ENCODE measurements at regions of chr1 and their contacts with region 1.

Region 1: GRCh38 chr1:183318433-183318832 is 99.7 kb downstream of the NMNAT2 start:
- DNase-seq: peak; percentile 55 to 92
- H3K4me3 ChIP-seq: no peak overlapping the region
- H3K27ac ChIP-seq: peak overlapping the region; percentile 69 to 82
- H3K4me1 ChIP-seq: peaks cover 0 to 19% of the 10 kb centered on the region in 2 donors
- H3K27me3 ChIP-seq: no peaks in the 10 kb centered on the region
- CTCF ChIP-seq: peak; percentile 75 to 78 (median 77)

Region 2: DNA sequence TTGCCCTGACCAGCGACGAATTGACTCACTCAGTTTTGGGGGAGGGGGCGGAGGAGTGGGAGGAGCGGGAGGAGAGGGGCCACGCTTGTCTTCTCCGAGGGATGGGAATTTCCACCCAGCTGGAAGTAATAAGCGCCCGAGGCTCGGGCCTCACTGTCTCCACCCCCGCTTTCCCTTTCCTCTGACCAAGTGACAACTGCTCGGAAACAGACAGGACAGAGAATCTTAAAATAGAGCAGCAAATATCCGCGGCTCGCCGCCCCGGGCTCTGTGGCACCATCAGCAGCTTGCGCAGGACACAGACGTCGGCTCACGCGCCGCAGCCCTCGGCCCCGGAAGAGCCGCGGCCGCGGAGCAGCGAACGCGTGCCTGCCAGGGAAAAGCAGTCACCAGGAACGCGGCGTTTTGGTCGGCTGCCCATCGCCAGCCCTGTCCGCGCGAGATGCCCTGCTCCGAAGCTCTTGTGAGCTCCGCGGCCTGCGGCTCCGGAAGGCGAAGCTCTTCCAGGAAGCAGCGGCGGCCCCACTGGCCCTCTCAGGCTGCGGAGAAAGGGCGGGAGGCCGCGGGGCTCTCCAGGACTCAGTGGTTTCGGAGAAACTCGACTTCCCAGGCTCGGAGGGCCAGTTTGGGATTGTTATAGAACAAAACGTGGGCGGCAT is 703.5 kb before region 1 on chr1:
- intact Hi-C with region 1: loop called (anchors 10 kb)
- DNase-seq: peak; percentile 73 to 93
- H3K4me3 ChIP-seq: peak overlapping the region; percentile 55 to 61
- H3K27ac ChIP-seq: peak overlapping the region; percentile 93 to 96
- H3K4me1 ChIP-seq: peaks cover 23 to 36% of the 10 kb centered on the region in 2 donors
- H3K27me3 ChIP-seq: no peaks in the 10 kb centered on the region
- CTCF ChIP-seq: no peak

Region 3: DNA sequence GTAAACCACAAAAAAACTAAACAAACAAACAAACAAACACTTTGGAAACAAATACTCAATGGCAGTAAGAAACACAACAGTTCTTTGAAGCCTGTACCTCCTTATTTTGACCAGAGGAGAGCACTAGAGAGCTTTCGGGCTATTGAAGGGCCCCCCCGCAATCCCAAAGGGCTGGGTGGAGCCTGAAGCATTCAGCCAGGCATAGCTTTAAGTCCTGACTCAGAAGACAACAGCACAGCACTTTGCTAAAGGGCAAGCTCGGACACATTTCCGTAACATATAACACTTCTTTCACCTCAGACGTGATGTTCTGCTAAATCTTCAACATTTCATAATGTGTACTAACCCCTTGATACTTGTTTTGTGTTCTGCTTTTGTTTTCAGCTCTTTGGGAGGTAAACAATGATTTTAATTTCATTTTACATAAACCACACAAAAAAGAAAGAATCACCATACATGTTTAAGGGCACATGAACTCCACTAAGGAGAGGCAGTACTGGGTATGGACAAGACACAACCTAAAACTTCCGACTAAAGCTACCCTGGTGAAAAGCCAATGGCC is 355.8 kb before region 1 on chr1:
- intact Hi-C with region 1: loop called (anchors 2 kb)
- DNase-seq: peak in 1 of 2 donors; percentile 90
- H3K4me3 ChIP-seq: peak overlapping the region; percentile 32 to 33
- H3K27ac ChIP-seq: peak overlapping the region in 1 of 2 donors; percentile 12
- H3K4me1 ChIP-seq: peaks cover 0 to 2% of the 10 kb centered on the region in 2 donors
- H3K27me3 ChIP-seq: no peaks in the 10 kb centered on the region
- CTCF ChIP-seq: peak; percentile 91 to 92 (median 91)

Region 4: GRCh38 chr1:183234660-183235476 is 83.6 kb before region 1 on chr1:
- intact Hi-C with region 1: loop called (anchors 2 kb)
- DNase-seq: peak; percentile 45 to 88
- H3K4me3 ChIP-seq: peak overlapping the region; percentile 60 to 62
- H3K27ac ChIP-seq: peak overlapping the region; percentile 77
- H3K4me1 ChIP-seq: peaks cover 0 to 11% of the 10 kb centered on the region in 2 donors
- H3K27me3 ChIP-seq: no peaks in the 10 kb centered on the region
- CTCF ChIP-seq: peak in 2 of 3 experiments; percentile 65 to 71

Region 5: GRCh38 chr1:183281553-183282091 is 36.8 kb before region 1 on chr1:
- intact Hi-C with region 1: loop called (anchors 1 kb)
- DNase-seq: peak; percentile 69 to 97
- H3K4me3 ChIP-seq: no peak overlapping the region
- H3K27ac ChIP-seq: peak overlapping the region; percentile 58 to 70
- H3K4me1 ChIP-seq: peaks cover 2 to 14% of the 10 kb centered on the region in 2 donors
- H3K27me3 ChIP-seq: no peaks in the 10 kb centered on the region
- CTCF ChIP-seq: peak; percentile 91 to 96 (median 91)

Region 6: GRCh38 chr1:183368202-183369108 is 50.0 kb after region 1 on chr1:
- intact Hi-C with region 1: no loop called
- DNase-seq: no peak
- H3K4me3 ChIP-seq: no peak overlapping the region
- H3K27ac ChIP-seq: no peak overlapping the region
- H3K4me1 ChIP-seq: no peaks in the 10 kb centered on the region
- H3K27me3 ChIP-seq: no peaks in the 10 kb centered on the region
- CTCF ChIP-seq: no peak

Region 7: DNA sequence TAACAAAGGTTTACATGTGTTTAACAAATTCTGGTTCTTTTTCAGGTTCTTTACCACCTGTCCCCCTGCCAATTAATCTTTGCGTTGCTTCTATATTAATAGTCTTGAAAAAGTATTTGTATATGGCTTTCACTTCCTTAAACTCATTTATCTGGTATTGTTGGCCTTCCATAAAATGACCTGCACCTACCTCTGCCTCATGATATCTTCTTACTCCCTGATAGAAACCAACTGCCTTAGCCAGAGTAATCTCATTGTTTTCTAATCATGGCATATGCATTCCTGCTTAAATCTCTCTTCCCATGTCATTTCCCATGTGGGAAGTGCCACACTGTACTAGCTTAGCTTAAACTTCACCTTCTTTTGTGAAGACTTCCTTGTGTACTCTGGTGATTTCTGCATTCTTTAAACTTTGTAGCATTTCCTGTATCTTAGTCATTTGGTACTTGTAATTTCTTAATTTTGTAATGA is 162.6 kb after region 1 on chr1:
- intact Hi-C with region 1: no loop called
- DNase-seq: no peak
- H3K4me3 ChIP-seq: no peak overlapping the region
- H3K27ac ChIP-seq: no peak overlapping the region
- H3K4me1 ChIP-seq: peaks cover 0 to 9% of the 10 kb centered on the region in 2 donors
- H3K27me3 ChIP-seq: no peaks in the 10 kb centered on the region
- CTCF ChIP-seq: no peak

Region 8: DNA sequence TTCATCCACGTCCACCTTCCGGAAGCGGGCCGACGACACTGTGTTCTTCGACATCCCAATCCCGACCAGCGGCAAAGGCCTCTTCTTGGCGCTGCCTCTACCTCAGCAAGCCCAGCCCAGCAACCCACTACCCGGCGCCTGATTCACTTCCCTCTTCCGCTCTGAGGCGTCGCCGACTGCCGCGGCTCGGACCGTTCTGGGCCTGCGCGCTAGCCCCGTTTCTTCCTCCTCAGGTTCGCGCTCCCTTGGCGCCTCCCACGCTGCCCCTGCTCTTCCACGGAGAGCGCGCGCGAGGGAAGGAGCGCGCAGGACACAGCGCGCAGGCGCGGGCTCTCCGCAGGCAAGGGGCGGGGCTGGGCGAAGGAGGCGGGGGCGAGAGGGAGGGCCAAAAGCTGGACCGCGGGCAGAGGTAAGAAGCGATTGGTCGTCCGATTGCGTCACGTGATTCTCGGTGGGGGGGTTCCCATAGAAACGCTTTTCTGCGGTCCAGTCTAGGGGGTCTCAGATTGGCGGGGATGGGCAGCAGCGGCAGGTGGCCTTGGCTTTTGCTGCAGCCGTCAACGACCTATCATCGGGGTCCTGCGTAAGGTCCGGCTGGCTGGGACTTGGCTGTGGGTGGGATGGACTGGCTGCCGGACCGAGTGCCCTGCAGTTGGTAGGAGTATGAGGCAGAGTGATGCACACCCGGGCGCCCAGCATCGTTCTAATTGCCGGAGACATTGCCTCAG is 317.3 kb after region 1 on chr1 and contains the start of gene ARPC5:
- intact Hi-C with region 1: loop called (anchors 10 kb)
- DNase-seq: peak; percentile 85 to 97
- H3K4me3 ChIP-seq: peak within 1 kb of the TSS; percentile 93 to 97
- H3K27ac ChIP-seq: peak within 1 kb of the TSS; percentile 95 to 99
- H3K4me1 ChIP-seq: peaks cover 0 to 6% of the 10 kb centered on the region in 2 donors
- H3K27me3 ChIP-seq: no peaks in the 10 kb centered on the region
- CTCF ChIP-seq: no peak
- total RNA-seq, gene ARPC5: 48.3 TPM

Region 9: GRCh38 chr1:183932412-183932811 is 614.0 kb after region 1 on chr1:
- intact Hi-C with region 1: no loop called
- DNase-seq: peak in 1 of 2 donors; percentile 84
- H3K4me3 ChIP-seq: peak overlapping the region in 1 of 2 donors; percentile 46
- H3K27ac ChIP-seq: peak overlapping the region in 1 of 2 donors; percentile 28
- H3K4me1 ChIP-seq: peaks cover 3 to 4% of the 10 kb centered on the region in 2 donors
- H3K27me3 ChIP-seq: no peaks in the 10 kb centered on the region
- CTCF ChIP-seq: no peak

Region 10: GRCh38 chr1:184954231-184954995 is 1636.0 kb after region 1 on chr1:
- intact Hi-C with region 1: loop called (anchors 10 kb)
- DNase-seq: no peak
- H3K4me3 ChIP-seq: peak overlapping the region; percentile 7 to 11
- H3K27ac ChIP-seq: peak overlapping the region; percentile 75 to 82
- H3K4me1 ChIP-seq: peaks cover 2 to 38% of the 10 kb centered on the region in 2 donors
- H3K27me3 ChIP-seq: no peaks in the 10 kb centered on the region
- CTCF ChIP-seq: peak in 1 of 3 experiments; percentile 11